ENCODE measurements at regions of chr17 and their contacts with region 1.

Region 1: GRCh38 chr17:32486111-32486700 is 587 bp upstream of the CDK5R1 start:
- DNase-seq: peak; percentile 62

Region 2: GRCh38 chr17:31645351-31645750 is 840.9 kb before region 1 on chr17:
- in situ Hi-C with region 1: no loop called
- DNase-seq: no peak

Region 3: DNA sequence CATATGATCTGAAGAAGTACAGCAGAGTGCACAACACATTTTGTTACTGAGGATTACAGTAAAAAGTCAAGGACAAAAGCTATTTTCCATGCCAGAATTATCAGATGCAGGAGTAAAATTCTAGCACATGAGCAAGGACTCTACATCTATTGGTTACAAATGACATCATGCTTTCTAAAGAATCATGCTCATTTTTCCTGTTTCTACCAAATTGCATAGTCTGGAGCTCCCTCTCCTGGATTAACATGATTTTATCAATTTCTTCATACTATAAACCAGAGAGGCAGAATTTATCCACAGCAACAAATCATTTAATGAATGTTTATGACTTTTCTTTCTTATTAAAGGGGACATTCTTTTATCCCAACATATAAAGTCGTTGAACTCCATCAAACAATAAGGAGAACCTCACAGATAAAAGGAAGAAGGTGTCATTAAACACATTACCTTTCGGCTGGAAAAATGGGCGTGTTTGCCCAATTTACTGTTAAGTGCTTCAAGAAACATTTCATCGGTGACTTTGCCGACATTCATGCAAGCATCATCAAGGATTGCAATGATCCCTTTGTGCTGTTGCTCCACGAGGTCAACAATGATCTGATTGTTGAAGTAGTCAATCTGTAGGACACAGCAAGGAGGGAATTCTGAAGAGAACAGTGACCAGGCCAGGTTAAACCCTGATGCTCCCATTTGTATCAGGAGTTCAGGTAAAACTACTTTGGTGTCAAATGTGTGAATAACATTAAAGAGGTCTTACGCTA is 269.0 kb after region 1 on chr17:
- in situ Hi-C with region 1: loop called (anchors 25 kb)
- DNase-seq: peak; percentile 80